Common myeloid progenitor, CD34-positive (primary cell): ENCODE measurements at regions of chr14 and their contacts with region 1.

Region 1: GRCh38 chr14:24710403-24711112 is 76.6 kb upstream of the GZMB start:
- DNase-seq: peak; percentile 61 to 81 (median 75)
- H3K4me3 ChIP-seq: no peak overlapping the region
- H3K27ac ChIP-seq: no peak overlapping the region
- H3K4me1 ChIP-seq: no peaks in the 10 kb centered on the region
- H3K27me3 ChIP-seq: no peaks in the 10 kb centered on the region

Region 2: DNA sequence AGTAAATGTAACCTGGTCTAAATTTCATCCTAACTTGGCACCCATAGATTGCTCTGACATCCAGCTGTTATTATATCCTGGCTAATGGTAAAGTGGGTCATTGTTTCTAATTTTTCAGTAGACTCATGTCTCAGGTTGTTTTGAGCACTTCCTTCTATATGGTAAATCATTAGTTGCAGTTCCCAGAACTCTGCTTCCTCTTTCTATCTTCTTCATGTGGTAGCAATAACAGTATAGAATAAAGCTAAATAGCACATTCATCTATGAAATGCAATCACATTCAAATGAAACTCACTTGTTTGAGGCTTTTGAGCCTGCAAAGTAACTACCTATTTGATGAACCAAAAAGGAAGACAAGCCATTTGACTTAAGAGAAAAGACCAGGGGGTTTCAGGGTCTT is 11.5 kb before region 1 on chr14:
- CTCF ChIA-PET with region 1: interaction called, 19 read pairs
- POLR2A ChIA-PET with region 1: interaction called, 3 read pairs
- DNase-seq: peak in 2 of 3 donors; percentile 68 to 78
- H3K4me3 ChIP-seq: no peak overlapping the region
- H3K27ac ChIP-seq: no peak overlapping the region
- H3K4me1 ChIP-seq: peaks cover 10 to 54% (median 21%) of the 10 kb centered on the region in 4 experiments
- H3K27me3 ChIP-seq: no peaks in the 10 kb centered on the region

Region 3: DNA sequence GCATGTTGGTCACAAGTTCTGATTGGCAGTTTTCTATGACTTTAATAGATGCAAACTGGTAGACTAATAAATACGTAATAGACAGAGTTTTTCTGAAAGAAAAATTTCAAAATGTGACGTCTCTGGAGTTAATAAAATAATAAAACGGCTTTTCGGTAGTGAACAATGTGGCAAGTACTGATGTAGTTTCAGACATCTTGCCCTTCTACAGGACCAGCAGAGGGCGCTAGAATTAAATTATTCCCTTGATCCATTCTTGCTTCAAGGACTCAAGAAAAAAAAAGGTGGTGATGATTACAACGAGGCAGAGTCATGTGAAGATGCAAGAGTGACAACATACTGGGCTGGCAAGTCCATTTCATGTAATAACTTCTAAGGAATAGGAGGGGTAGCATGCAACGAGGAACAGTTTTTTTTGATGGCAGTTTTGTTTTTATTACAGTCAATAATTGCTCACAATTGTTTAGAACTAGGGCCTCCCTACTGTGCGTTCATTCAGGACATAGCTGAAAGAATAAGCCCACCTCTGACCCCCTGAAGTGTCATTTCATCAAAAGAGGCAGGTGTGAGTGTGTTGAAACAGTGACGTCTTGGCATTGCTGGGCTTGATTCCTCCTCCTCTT is 24.4 kb after region 1 on chr14:
- CTCF ChIA-PET with region 1: interaction called, 36 read pairs
- POLR2A ChIA-PET with region 1: no interaction called
- DNase-seq: peak; percentile 83 to 91 (median 87)
- H3K4me3 ChIP-seq: no peak overlapping the region
- H3K27ac ChIP-seq: no peak overlapping the region
- H3K4me1 ChIP-seq: no peaks in the 10 kb centered on the region
- H3K27me3 ChIP-seq: no peaks in the 10 kb centered on the region

Region 4: DNA sequence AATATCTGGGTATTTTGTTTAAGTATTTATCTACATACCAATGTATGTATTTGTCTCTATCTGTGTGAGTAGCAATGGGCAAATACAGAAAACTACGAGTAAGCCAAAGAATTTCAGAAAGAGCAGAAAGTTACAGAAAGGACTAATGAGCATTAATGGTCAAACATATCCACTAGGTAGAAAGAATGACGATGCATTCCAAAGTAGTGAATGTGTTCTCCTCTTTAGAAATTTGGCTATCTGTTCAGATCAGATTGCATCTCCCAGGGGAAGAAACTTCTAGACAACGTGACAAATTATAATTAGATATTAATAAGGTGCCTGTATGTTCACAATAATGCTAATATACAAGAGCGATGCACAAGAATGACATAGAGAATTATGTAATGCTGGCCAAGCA is 117.9 kb after region 1 on chr14:
- CTCF ChIA-PET with region 1: no interaction called
- POLR2A ChIA-PET with region 1: no interaction called
- DNase-seq: no peak
- H3K4me3 ChIP-seq: no peak overlapping the region
- H3K27ac ChIP-seq: no peak overlapping the region
- H3K4me1 ChIP-seq: no peaks in the 10 kb centered on the region
- H3K27me3 ChIP-seq: no peaks in the 10 kb centered on the region

Region 5: GRCh38 chr14:25132732-25133422 is 422.3 kb after region 1 on chr14:
- CTCF ChIA-PET with region 1: interaction called, 17 read pairs
- POLR2A ChIA-PET with region 1: no interaction called
- DNase-seq: peak; percentile 54 to 71 (median 71)
- H3K4me3 ChIP-seq: peak overlapping the region in 2 of 7 experiments; percentile 14 to 40
- H3K27ac ChIP-seq: no peak overlapping the region
- H3K4me1 ChIP-seq: peaks cover 0 to 6% (median 2%) of the 10 kb centered on the region in 4 experiments
- H3K27me3 ChIP-seq: peaks cover 3 to 41% (median 7%) of the 10 kb centered on the region in 5 experiments